ENCODE measurements at regions of chr1 and their contacts with region 1.

Region 1: GRCh38 chr1:91754348-91754747 is 131.6 kb downstream of the TGFBR3 start:
- DNase-seq: peak; percentile 71
- H3K4me3 Mint-ChIP-seq: peak overlapping the region; percentile 15
- H3K27ac Mint-ChIP-seq: peak overlapping the region; percentile 85
- H3K4me1 Mint-ChIP-seq: peaks cover 34% of the 10 kb centered on the region
- H3K27me3 Mint-ChIP-seq: peaks cover 4% of the 10 kb centered on the region

Region 2: GRCh38 chr1:90640325-90640724 is 1114.0 kb before region 1 on chr1:
- intact Hi-C with region 1: no loop called
- DNase-seq: no peak
- H3K4me3 Mint-ChIP-seq: no peak overlapping the region
- H3K27ac Mint-ChIP-seq: no peak overlapping the region
- H3K4me1 Mint-ChIP-seq: no peaks in the 10 kb centered on the region
- H3K27me3 Mint-ChIP-seq: no peaks in the 10 kb centered on the region

Region 3: DNA sequence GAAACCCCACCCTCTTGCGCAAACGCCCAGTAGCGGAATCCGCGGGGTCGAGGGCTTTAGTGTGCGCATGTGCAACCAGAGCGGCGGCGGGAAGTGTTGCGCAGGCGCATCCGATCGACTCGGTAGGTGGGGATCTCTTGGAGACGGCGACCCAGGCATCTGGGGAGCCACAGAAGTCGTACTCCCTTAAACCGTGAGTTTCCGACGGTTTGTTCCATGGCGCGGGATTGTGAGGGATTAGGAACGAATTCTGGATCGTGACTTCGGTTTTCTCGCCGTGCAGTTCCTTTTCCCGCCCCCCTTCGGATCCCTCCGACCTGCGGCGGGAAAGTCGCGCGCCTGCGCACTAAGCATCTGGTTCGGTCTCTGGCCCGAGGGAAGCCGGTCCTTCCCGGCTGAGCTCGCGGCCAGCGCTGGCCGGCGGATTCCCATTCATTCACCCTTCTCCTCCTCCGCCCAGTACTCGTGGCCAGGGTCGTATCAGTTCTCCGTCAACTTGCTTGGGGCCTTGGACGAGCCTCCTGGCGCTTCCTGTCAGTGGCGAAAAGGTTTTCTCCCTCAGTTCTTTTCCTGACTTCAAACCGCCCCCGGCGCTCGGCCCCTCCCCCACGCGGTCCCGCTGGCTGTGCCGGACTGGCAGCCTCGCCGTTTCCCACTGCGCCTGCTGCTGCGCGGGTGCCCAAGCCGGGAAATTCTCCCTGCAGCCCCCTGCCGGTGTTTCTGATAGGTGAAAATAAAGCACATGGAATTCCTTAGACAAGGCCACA is 253.4 kb before region 1 on chr1 and contains the start of gene CDC7:
- intact Hi-C with region 1: loop called (anchors 5 kb)
- DNase-seq: peak; percentile 95
- H3K4me3 Mint-ChIP-seq: no peak within 1 kb of the TSS
- H3K27ac Mint-ChIP-seq: no peak within 1 kb of the TSS
- H3K4me1 Mint-ChIP-seq: peaks cover 28% of the 10 kb centered on the region
- H3K27me3 Mint-ChIP-seq: no peaks in the 10 kb centered on the region
- total RNA-seq, gene CDC7: 21.4 and 22.3 TPM in 2 replicates

Region 4: DNA sequence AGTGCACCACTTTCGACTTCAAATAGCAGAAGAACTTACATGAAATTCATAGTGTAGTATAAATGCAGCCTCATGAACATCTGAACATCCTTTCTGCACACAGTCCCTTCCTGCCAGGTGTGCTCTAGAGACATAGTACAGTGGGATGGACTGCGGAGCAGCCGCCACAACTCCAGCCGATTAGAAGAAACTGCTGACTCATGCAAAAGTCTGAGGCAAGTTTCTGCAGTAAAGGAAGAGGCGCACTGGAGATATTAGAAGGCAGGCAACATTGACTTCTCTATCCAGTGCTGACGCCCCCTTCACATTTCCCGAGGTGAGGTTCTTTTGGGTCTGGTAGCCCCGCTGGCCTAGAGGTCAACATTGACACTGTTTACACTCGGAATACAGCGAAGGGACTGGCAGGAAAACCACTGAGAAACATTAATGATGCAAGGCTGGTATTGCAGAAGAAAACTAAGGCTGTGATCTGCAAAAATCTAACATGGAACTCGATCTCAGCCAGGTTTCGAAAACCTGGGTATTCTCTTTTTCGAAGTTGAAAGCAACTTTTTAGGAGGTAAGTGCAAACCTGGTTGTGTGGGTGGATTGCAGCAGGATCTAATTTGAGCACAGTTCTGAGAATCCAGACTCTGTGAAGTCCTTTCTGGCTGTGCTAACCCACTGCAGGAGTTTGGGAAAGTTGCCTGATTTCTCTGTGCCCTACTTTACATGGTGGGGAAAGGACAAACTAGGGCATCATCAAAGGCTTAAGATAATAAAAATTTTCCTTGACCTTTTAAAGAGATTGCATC is 163.0 kb before region 1 on chr1:
- intact Hi-C with region 1: loop called (anchors 10 kb)
- DNase-seq: peak; percentile 66
- H3K4me3 Mint-ChIP-seq: peak overlapping the region; percentile 76
- H3K27ac Mint-ChIP-seq: peak overlapping the region; percentile 85
- H3K4me1 Mint-ChIP-seq: peaks cover 29% of the 10 kb centered on the region
- H3K27me3 Mint-ChIP-seq: peaks cover 2% of the 10 kb centered on the region

Region 5: DNA sequence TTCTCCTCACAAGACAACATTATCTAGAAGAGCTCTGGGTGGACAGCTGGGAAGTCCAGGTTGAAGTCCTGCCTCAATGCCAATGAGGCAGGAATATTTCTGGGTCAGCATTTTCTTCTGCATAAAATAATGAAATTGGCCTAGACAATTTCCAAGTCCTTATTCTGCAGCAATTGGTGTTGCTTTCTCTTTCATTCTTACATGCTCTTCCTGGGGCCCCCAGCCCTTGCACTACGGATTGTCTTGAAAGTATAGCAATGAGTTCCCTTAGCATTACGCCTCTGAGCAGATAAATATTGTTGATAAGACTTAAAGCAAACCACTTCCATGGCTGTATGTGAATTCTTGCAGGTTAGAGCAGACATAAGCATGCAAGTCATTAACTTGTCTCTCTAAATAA is 56.9 kb before region 1 on chr1:
- intact Hi-C with region 1: loop called (anchors 1 kb)
- DNase-seq: peak; percentile 90
- H3K4me3 Mint-ChIP-seq: peak overlapping the region; percentile 74
- H3K27ac Mint-ChIP-seq: peak overlapping the region; percentile 76
- H3K4me1 Mint-ChIP-seq: peaks cover 30% of the 10 kb centered on the region
- H3K27me3 Mint-ChIP-seq: no peaks in the 10 kb centered on the region

Region 6: GRCh38 chr1:91732291-91733107 is 21.8 kb before region 1 on chr1:
- intact Hi-C with region 1: loop called (anchors 1 kb)
- DNase-seq: no peak
- H3K4me3 Mint-ChIP-seq: peak overlapping the region; percentile 17
- H3K27ac Mint-ChIP-seq: peak overlapping the region; percentile 69
- H3K4me1 Mint-ChIP-seq: peaks cover 45% of the 10 kb centered on the region
- H3K27me3 Mint-ChIP-seq: peaks cover 2% of the 10 kb centered on the region

Region 7: GRCh38 chr1:91768787-91769725 is 14.7 kb after region 1 on chr1:
- intact Hi-C with region 1: no loop called
- DNase-seq: no peak
- H3K4me3 Mint-ChIP-seq: no peak overlapping the region
- H3K27ac Mint-ChIP-seq: no peak overlapping the region
- H3K4me1 Mint-ChIP-seq: peaks cover 7% of the 10 kb centered on the region
- H3K27me3 Mint-ChIP-seq: peaks cover 2% of the 10 kb centered on the region

Region 8: DNA sequence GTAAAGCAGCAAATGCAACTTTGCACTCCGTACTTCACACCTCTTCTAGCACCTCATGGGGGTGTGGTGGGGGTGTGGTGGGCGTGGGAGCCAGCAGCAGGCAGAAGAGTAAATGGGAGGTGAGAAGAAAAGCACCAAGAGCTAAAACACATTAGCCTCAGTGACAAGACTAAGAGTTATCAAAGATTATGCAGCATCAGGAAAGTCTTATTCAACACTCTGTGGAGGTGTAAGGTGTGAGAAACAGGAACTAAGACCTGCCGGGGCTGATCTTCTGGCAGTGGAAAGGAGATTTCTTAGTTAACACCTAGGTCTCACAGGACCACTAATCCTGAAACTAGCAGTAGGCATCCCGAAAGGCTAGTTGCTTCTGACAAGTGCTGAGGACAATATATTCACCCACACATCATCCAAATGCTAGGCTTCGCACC is 121.7 kb after region 1 on chr1:
- intact Hi-C with region 1: loop called (anchors 1 kb)
- DNase-seq: no peak
- H3K4me3 Mint-ChIP-seq: peak overlapping the region; percentile 44
- H3K27ac Mint-ChIP-seq: peak overlapping the region; percentile 13
- H3K4me1 Mint-ChIP-seq: peaks cover 58% of the 10 kb centered on the region
- H3K27me3 Mint-ChIP-seq: peaks cover 12% of the 10 kb centered on the region

Region 9: GRCh38 chr1:92310185-92310597 is 555.8 kb after region 1 on chr1:
- intact Hi-C with region 1: loop called (anchors 10 kb)
- DNase-seq: no peak
- H3K4me3 Mint-ChIP-seq: no peak overlapping the region
- H3K27ac Mint-ChIP-seq: no peak overlapping the region
- H3K4me1 Mint-ChIP-seq: peaks cover 34% of the 10 kb centered on the region
- H3K27me3 Mint-ChIP-seq: no peaks in the 10 kb centered on the region